Activated CD8-positive, alpha-beta T cell treated with anti-CD3 and anti-CD28 coated beads for 36 hours (primary cell): ENCODE measurements at regions of chr3 and their contacts with region 1.

Region 1: GRCh38 chr3:107414325-107414964 is 37.2 kb downstream of the CCDC54 start:
- DNase-seq: no peak
- ATAC-seq: peak; percentile 91
- H3K4me3 Mint-ChIP-seq: no peak overlapping the region
- H3K27ac Mint-ChIP-seq: no peak overlapping the region
- H3K4me1 Mint-ChIP-seq: peaks cover 11% of the 10 kb centered on the region
- H3K27me3 Mint-ChIP-seq: peaks cover 2% of the 10 kb centered on the region
- CTCF ChIP-seq: no peak

Region 2: DNA sequence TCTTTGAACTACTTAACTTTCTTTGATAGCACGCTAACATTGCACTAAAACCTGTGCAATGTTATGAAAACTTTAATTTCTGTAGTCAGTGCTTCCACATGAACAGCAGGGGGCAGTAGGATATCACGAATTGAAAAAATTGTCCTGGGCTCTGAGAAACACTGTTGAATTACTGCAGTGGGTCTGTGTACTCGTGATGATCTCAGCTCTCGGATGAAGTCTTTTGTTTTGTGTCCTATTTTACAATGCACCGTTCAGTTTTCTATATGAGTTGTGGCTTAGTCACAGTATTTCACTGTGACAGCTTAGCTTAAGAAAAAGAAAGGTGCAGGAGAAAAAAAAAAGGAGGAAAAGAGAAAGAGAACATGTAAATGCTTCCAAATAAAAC is 178.5 kb before region 1 on chr3:
- CTCF ChIA-PET with region 1: interaction called, 71 read pairs
- POLR2A ChIA-PET with region 1: no interaction called
- intact Hi-C with region 1: no loop called
- DNase-seq: peak; percentile 52
- ATAC-seq: peak; percentile 71
- H3K4me3 Mint-ChIP-seq: peak overlapping the region; percentile 60
- H3K27ac Mint-ChIP-seq: no peak overlapping the region
- H3K4me1 Mint-ChIP-seq: peaks cover 13% of the 10 kb centered on the region
- H3K27me3 Mint-ChIP-seq: peaks cover 2% of the 10 kb centered on the region
- CTCF ChIP-seq: peak; percentile 94

Region 3: GRCh38 chr3:107392549-107393165 is 21.8 kb before region 1 on chr3:
- CTCF ChIA-PET with region 1: no interaction called
- POLR2A ChIA-PET with region 1: no interaction called
- intact Hi-C with region 1: no loop called
- DNase-seq: no peak
- ATAC-seq: no peak
- H3K4me3 Mint-ChIP-seq: no peak overlapping the region
- H3K27ac Mint-ChIP-seq: no peak overlapping the region
- H3K4me1 Mint-ChIP-seq: no peaks in the 10 kb centered on the region
- H3K27me3 Mint-ChIP-seq: no peaks in the 10 kb centered on the region
- CTCF ChIP-seq: no peak

Region 4: DNA sequence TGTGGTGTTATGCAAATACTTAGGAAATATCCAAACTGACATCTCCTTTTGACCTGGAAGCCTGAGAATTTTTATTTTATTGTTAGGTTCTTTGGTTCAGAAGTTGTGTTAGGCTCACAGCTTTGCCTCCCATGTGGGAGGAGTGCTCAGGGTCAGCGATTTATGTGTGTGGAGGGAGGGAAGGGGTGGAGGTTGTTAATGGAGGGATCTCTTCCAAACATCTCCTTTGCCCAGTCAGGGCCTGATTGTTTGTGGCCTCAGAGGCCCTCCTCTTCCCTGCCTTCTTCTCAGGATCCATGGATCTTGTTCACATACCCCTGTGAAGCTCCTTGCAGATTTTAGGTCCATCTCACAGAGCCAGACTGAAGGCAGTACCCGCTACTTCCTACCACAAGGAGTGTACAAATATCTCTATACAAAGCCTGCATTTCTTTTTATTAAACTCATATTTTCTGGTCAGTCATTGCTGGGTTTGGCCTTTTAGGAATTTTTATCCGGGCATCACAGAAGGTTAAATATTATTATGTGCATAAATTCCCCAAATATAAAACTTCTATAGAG is 148.6 kb after region 1 on chr3:
- CTCF ChIA-PET with region 1: no interaction called
- POLR2A ChIA-PET with region 1: no interaction called
- intact Hi-C with region 1: no loop called
- DNase-seq: no peak
- ATAC-seq: no peak
- H3K4me3 Mint-ChIP-seq: no peak overlapping the region
- H3K27ac Mint-ChIP-seq: no peak overlapping the region
- H3K4me1 Mint-ChIP-seq: peaks cover 49% of the 10 kb centered on the region
- H3K27me3 Mint-ChIP-seq: no peaks in the 10 kb centered on the region
- CTCF ChIP-seq: no peak